Prostate gland (tissue), 2 donors: ENCODE measurements at regions of chr6 and their contacts with region 1.

Region 1: DNA sequence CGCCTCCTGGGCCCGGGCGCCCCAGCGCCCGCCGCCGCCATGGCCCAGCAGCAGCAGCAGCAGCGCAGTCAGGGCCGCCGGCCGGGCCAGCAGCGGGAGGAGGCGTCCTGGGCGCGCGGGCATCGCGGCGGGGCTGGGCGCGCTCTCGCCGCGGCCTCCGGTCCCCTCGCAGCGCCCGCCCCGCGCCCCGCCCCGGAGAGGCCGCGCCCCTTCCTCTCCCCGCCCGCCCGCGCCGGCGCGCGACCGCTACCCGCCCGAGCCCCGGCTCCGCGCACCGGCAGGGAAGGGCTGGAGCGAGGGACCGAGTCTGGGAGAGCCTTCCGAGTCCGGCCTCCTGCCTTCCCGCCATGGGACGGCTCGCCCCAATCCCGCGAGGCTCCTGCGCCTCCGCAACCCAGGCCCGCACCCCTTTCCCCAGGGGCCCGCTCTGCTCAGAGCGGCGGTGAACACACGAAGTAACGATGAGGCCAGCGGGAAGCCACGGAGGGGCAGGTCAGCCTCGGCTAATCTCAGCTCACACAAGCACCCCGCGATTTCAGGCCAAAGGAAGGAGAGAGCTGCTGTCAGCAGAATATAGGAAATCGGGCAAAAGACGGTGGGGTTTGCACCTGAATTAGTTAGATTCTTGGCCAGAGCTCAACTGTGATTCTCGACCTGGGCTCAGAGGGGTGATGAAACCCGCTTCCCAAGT is at the start of gene TXNDC5:
- DNase-seq: peak; percentile 67
- H3K4me3 ChIP-seq: peak within 1 kb of the TSS; percentile 79 to 83
- H3K27ac ChIP-seq: peak within 1 kb of the TSS; percentile 63 to 66
- H3K4me1 ChIP-seq: no peaks in the 10 kb centered on the region
- H3K27me3 ChIP-seq: no peaks in the 10 kb centered on the region
- CTCF ChIP-seq: no peak
- POLR2A ChIP-seq: no peak
- total RNA-seq, gene TXNDC5: 123 to 128 TPM

Region 2: GRCh38 chr6:7787137-7787608 is 123.6 kb before region 1 on chr6:
- intact Hi-C with region 1: loop called (anchors 5 kb)
- DNase-seq: peak; percentile 27
- H3K4me3 ChIP-seq: no peak overlapping the region
- H3K27ac ChIP-seq: no peak overlapping the region
- H3K4me1 ChIP-seq: no peaks in the 10 kb centered on the region
- H3K27me3 ChIP-seq: no peaks in the 10 kb centered on the region
- CTCF ChIP-seq: no peak
- POLR2A ChIP-seq: no peak

Region 3: DNA sequence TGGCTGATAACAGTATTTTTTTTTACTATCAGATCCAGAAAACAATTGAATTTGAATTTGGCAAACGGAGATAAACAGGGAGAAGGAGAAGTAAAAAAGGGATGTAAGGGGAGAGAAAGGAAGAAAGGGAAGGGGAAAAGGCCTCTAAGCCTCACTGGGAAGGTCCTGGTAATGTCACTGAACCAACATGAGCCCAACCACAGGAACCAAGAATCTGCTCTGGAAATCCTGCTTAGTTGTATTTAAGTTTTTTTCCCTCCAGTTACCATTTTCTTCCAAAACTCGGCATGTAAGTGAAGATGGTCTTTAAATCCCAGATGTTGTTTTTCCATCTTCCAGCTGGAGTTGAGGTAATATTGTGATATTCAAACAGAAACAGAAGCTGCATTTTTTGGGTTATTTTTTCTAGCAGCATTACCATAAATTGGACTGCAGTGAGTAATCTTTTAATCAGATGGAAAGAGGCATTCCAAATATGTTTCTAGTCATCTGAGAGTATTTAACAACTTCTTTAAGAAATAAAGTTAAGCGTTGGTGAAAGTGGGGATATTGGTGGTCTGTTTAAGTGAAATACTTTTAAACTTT is 91.3 kb before region 1 on chr6:
- intact Hi-C with region 1: no loop called
- DNase-seq: no peak
- H3K4me3 ChIP-seq: no peak overlapping the region
- H3K27ac ChIP-seq: no peak overlapping the region
- H3K4me1 ChIP-seq: no peaks in the 10 kb centered on the region
- H3K27me3 ChIP-seq: no peaks in the 10 kb centered on the region
- CTCF ChIP-seq: no peak
- POLR2A ChIP-seq: no peak

Region 4: DNA sequence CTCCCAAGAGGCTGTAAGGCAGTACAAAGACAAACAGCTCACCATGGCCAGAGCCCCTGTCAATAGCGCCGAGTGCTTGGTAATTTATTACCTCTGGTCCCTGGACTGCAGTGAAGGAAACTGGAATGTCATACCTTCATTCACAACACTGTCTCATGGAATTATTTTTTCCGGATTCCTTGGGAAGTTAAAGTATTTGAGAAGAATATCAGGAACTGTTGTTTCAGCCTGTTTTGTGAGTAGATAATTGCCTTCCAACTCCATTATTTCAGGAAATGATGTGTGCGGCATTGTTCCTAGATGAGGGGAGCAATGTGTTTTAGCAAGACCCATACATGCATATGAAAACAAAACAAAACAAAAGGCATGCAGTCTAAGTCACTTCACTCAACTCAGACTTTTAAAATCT is 89.4 kb after region 1 on chr6:
- intact Hi-C with region 1: loop called (anchors 5 kb)
- DNase-seq: no peak
- H3K4me3 ChIP-seq: no peak overlapping the region
- H3K27ac ChIP-seq: no peak overlapping the region
- H3K4me1 ChIP-seq: no peaks in the 10 kb centered on the region
- H3K27me3 ChIP-seq: no peaks in the 10 kb centered on the region
- CTCF ChIP-seq: no peak
- POLR2A ChIP-seq: no peak

Region 5: DNA sequence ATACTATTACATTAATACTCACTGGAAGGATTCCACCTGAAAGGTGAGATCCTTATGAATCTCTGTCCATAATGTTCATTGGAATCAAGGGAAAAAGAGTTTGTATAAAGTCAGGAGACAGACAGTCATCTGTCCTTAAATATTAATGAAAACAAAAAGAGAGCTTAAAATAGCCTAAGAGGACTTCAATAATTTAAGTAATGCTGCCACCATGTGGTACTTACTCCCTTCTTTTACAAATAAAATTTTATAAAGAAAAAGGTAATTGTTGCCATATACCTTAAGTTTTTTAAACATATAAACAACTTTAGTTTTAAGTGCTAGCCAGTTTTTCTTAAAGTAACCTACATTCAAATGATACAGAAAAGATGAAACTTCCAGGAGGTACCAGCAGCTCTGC is 148.3 kb after region 1 on chr6:
- intact Hi-C with region 1: no loop called
- DNase-seq: no peak
- H3K4me3 ChIP-seq: no peak overlapping the region
- H3K27ac ChIP-seq: no peak overlapping the region
- H3K4me1 ChIP-seq: no peaks in the 10 kb centered on the region
- H3K27me3 ChIP-seq: no peaks in the 10 kb centered on the region
- CTCF ChIP-seq: peak in 3 of 4 experiments; percentile 25 to 37 (median 27)
- POLR2A ChIP-seq: no peak